Heart left ventricle (tissue), 16 donors: ENCODE measurements at regions of chr1 and their contacts with region 1.

Region 1: DNA sequence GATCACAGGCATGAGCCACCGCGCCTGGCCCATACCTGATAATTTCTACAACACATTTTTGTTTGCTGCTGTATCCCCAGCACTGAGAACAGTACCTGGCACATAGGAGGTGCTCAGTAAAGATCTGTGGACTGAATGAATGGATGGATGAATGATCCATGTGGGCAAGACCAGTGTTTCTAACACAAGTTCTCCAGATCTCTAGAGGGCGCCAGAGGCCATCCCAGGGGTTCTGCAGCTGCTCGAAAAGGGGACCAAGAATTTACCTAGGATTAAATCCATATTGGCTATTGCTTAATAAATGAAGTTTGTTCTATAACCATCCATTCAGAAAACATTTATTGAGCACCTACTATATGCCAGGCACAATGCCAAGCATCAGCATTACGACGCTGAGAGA is 167.7 kb downstream of the ACTL8 start:
- DNase-seq: peak in 3 of 5 donors; percentile 24 to 39 (median 36)
- ATAC-seq: no peak
- H3K4me3 ChIP-seq: no peak overlapping the region
- H3K27ac ChIP-seq: no peak overlapping the region
- H3K4me1 ChIP-seq: peaks cover 0 to 5% (median 0%) of the 10 kb centered on the region in 12 donors
- H3K27me3 ChIP-seq: peaks cover 0 to 52% (median 7%) of the 10 kb centered on the region in 9 donors
- CTCF ChIP-seq: peak; percentile 31 to 57 (median 45)
- POLR2A ChIP-seq: no peak

Region 2: GRCh38 chr1:18041102-18041501 is 118.3 kb after region 1 on chr1:
- intact Hi-C with region 1: loop called in 1 of 10 experiments (anchors 5 kb)
- DNase-seq: no peak
- ATAC-seq: peak in 3 of 4 donors; percentile 38 to 72 (median 49)
- H3K4me3 ChIP-seq: no peak overlapping the region
- H3K27ac ChIP-seq: no peak overlapping the region
- H3K4me1 ChIP-seq: no peaks in the 10 kb centered on the region
- H3K27me3 ChIP-seq: peaks cover 0 to 41% (median 10%) of the 10 kb centered on the region in 9 donors
- CTCF ChIP-seq: no peak
- POLR2A ChIP-seq: no peak

Region 3: GRCh38 chr1:18100491-18101063 is 177.7 kb after region 1 on chr1:
- intact Hi-C with region 1: loop called in 6 of 10 experiments (anchors 2 to 5 kb)
- DNase-seq: peak in 4 of 5 donors; percentile 26 to 57 (median 40)
- ATAC-seq: peak; percentile 34 to 62 (median 52)
- H3K4me3 ChIP-seq: no peak overlapping the region
- H3K27ac ChIP-seq: no peak overlapping the region
- H3K4me1 ChIP-seq: no peaks in the 10 kb centered on the region
- H3K27me3 ChIP-seq: peaks cover 0 to 46% (median 12%) of the 10 kb centered on the region in 9 donors
- CTCF ChIP-seq: peak; percentile 58 to 78 (median 70)
- POLR2A ChIP-seq: no peak

Region 4: DNA sequence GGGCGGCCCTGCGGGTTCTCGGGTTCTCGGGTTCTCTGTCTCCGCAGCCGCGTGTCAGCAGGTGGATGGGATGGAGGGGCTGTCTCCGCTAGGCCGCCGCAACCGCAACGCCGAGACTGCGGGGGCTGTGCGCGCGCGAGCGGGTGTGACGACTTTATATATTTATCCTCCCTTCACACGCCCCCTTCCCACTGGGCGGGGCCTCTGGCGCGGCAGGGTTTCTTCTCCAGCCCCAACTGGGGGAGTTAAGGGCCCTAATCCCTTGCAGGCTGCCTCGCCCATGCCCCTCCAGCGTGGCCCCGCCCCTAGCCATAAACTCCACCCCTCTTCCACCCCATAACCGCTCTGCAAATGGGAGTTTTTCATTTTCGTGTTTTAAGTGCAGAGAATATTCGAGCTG is 188.1 kb after region 1 on chr1:
- intact Hi-C with region 1: no loop called
- DNase-seq: peak in 2 of 5 donors; percentile 49 to 72
- ATAC-seq: peak in 3 of 4 donors; percentile 21 to 52 (median 35)
- H3K4me3 ChIP-seq: peak overlapping the region in 10 of 12 donors; percentile 16 to 43 (median 34)
- H3K27ac ChIP-seq: peak overlapping the region in 1 of 12 donors; percentile 32
- H3K4me1 ChIP-seq: peaks cover 0 to 41% (median 11%) of the 10 kb centered on the region in 12 donors
- H3K27me3 ChIP-seq: peaks cover 33 to 93% (median 66%) of the 10 kb centered on the region in 9 donors
- CTCF ChIP-seq: no peak
- POLR2A ChIP-seq: no peak

Region 5: DNA sequence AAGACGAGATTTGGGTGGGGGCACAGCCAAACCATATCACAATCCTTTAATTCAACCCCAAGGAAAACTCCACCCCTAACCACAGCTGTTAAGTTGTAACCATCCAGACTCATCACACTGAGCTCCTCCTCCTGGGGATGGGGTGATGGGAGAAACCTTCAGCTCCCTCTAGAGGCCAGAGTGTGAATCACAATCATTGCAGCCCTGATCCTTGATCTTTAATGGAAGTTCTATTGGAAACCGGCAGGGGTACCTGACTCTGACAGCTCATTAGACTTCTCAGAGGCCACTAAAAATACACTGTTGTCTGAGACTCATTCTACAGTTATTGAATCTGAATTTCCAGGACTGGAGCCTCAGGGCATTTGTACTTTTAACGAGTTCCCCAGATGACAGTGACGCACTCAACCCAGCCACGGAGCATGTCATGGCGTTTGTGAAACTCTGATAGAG is 312.0 kb after region 1 on chr1:
- intact Hi-C with region 1: loop called in 3 of 10 experiments (anchors 5 to 10 kb)
- DNase-seq: no peak
- ATAC-seq: peak in 1 of 4 donors; percentile 61
- H3K4me3 ChIP-seq: no peak overlapping the region
- H3K27ac ChIP-seq: no peak overlapping the region
- H3K4me1 ChIP-seq: no peaks in the 10 kb centered on the region
- H3K27me3 ChIP-seq: peaks cover 0 to 25% (median 5%) of the 10 kb centered on the region in 9 donors
- CTCF ChIP-seq: peak in 11 of 12 donors; percentile 40 to 72 (median 56)
- POLR2A ChIP-seq: no peak

Region 6: DNA sequence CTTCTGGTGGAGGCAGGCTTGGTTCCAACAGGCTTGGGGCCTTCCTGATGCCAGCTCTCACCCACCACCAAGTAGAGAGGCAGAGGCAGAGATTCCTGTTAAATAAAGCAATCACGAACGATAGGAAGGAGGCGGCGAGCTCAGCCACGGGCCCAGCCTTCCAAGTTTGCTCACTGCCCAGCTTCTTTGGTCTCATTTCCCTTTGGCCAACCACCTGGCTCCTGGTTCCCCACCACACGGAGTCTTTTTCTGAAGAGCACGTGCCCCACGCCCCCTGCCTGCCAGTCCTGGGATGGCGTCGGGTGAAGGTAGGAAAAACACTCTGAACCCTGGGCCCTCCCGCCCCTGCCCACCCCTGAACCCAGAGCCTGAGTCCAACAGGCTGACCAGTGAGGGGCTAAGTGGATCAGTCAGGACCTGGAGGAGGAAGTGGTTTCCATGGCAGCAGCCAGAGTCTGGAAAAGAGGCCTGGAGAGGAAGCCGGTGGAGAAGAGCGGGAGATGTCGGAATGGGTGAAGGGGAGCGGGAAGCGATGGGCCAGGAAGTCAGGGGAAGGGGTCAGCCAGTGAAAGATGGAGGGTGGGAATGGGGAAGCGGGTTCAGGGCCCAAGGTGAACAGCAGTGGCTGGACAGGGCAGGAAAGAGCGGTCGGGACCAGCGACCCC is 399.7 kb after region 1 on chr1:
- intact Hi-C with region 1: no loop called
- DNase-seq: no peak
- ATAC-seq: no peak
- H3K4me3 ChIP-seq: no peak overlapping the region
- H3K27ac ChIP-seq: no peak overlapping the region
- H3K4me1 ChIP-seq: no peaks in the 10 kb centered on the region
- H3K27me3 ChIP-seq: peaks cover 0 to 30% (median 4%) of the 10 kb centered on the region in 9 donors
- CTCF ChIP-seq: peak in 1 of 12 donors; percentile 14
- POLR2A ChIP-seq: no peak

Region 7: DNA sequence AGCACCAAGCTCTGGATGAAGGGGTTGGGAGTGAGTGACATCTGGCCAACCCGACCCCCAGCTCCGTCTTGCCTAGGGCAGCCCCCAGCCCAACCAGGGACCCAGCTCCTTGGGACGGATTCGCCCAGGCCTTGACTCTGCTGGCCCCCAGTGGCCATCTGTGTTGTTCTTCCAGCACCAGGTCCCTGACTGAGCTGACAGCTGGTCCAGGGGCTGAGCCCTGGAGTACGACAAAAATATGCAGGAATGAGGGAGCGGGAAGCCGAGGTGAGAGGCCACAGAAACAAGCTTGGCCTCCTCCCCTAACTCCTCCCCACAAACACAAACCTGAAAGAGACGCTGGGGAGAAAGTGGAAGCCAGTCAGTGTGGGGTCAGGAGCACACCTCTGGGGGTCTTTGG is 652.8 kb after region 1 on chr1:
- intact Hi-C with region 1: loop called in 8 of 10 experiments (anchors 5 to 10 kb)
- DNase-seq: peak in 2 of 5 donors; percentile 56 to 78
- ATAC-seq: peak in 1 of 4 donors; percentile 65
- H3K4me3 ChIP-seq: no peak overlapping the region
- H3K27ac ChIP-seq: no peak overlapping the region
- H3K4me1 ChIP-seq: no peaks in the 10 kb centered on the region
- H3K27me3 ChIP-seq: peaks cover 0 to 51% (median 7%) of the 10 kb centered on the region in 9 donors
- CTCF ChIP-seq: peak in 11 of 12 donors; percentile 14 to 83 (median 62)
- POLR2A ChIP-seq: no peak

Region 8: DNA sequence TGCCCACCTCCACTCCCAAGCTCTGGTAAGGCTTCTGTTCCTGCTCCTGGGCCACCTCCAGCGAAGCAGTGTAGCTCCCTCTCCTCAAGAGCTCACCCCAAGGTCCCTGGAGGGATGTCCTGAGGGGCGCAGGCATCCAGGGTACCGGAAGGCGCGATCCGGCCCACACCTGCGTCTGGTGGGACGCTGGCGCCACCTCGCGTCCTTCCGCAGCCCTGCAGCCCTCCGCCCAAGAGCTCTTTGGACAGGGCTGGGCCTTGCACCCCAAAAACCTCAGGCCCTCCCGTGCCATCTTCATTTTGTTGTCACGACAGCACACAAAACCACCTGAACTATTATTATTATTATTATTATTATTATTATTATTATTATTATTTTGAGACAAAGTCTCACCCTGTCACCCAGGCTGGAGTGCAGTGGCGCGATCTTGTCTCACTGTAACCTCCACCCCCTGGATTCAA is 658.6 kb after region 1 on chr1:
- intact Hi-C with region 1: loop called in 8 of 10 experiments (anchors 5 to 10 kb)
- DNase-seq: peak in 1 of 5 donors; percentile 35
- ATAC-seq: peak in 3 of 4 donors; percentile 29 to 41 (median 29)
- H3K4me3 ChIP-seq: no peak overlapping the region
- H3K27ac ChIP-seq: no peak overlapping the region
- H3K4me1 ChIP-seq: peaks cover 0 to 17% (median 0%) of the 10 kb centered on the region in 12 donors
- H3K27me3 ChIP-seq: peaks cover 0 to 29% (median 0%) of the 10 kb centered on the region in 9 donors
- CTCF ChIP-seq: peak; percentile 47 to 77 (median 64)
- POLR2A ChIP-seq: no peak